ENCODE measurements at regions of chr2 and their contacts with region 1.

Region 1: DNA sequence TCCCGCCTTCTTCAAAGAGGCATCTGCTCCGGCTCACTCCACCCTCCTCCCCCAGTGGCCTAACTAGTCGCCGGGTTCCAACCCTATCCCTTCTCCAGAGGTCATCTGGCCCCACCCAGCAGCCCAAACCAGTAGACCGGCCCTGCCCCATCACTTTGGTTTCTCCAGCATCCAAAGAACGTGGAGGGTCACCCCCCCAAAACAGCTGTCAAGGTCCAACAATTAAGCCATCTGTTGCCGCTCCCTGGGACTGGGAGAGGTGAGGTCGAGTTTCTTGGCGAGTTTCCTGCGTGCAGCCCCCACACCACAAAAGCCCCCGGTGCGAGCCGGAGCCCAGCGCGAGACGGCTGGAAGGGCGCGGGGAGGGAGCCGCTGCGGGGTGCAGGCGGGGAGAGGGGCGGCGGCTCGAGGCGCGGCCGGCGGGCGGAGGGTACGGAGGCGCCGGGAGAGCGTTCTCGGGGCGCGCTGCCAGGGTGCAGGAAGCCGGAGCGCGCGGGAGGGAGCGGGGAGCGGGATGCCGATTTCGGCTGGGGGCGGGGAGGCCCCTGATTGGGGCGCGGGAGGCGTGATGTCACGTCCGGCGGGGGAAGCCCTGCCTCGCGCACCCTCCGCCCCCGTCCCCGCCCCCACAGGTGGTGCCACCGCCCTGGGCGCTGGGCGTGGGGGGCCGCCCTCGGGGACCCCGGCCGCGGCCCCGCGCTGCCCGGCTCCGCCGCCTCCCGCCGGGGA is 571 bp upstream of the GPC1 start:
- DNase-seq: no peak
- ATAC-seq: peak; percentile 78
- H3K4me3 ChIP-seq: peak overlapping the region; percentile 69 to 79
- H3K27ac ChIP-seq: peak overlapping the region; percentile 81
- H3K4me1 ChIP-seq: peaks cover 12% of the 10 kb centered on the region
- H3K27me3 ChIP-seq: no peaks in the 10 kb centered on the region
- CTCF ChIP-seq: no peak

Region 2: GRCh38 chr2:240149943-240150784 is 284.7 kb before region 1 on chr2:
- CTCF ChIA-PET with region 1: no interaction called
- POLR2A ChIA-PET with region 1: no interaction called
- in situ Hi-C with region 1: no loop called
- intact Hi-C with region 1: loop called (anchors 5 kb)
- DNase-seq: no peak
- ATAC-seq: peak; percentile 76
- H3K4me3 ChIP-seq: no peak overlapping the region
- H3K27ac ChIP-seq: no peak overlapping the region
- H3K4me1 ChIP-seq: no peaks in the 10 kb centered on the region; the same call in 1 of the 2 replicates
- H3K27me3 ChIP-seq: peaks cover 8% of the 10 kb centered on the region
- CTCF ChIP-seq: peak; percentile 95

Region 3: GRCh38 chr2:240232961-240233893 is 201.7 kb before region 1 on chr2:
- CTCF ChIA-PET with region 1: interaction called, 6 read pairs
- POLR2A ChIA-PET with region 1: no interaction called
- in situ Hi-C with region 1: no loop called
- intact Hi-C with region 1: loop called (anchors 1 kb)
- DNase-seq: peak; percentile 52
- ATAC-seq: peak; percentile 94
- H3K4me3 ChIP-seq: peak overlapping the region; percentile 37 to 55
- H3K27ac ChIP-seq: no peak overlapping the region
- H3K4me1 ChIP-seq: peaks cover 8% of the 10 kb centered on the region; the same call in 1 of the 2 replicates
- H3K27me3 ChIP-seq: no peaks in the 10 kb centered on the region
- CTCF ChIP-seq: peak; percentile 93

Region 4: GRCh38 chr2:240472078-240472790 is 37.3 kb after region 1 on chr2:
- CTCF ChIA-PET with region 1: no interaction called
- POLR2A ChIA-PET with region 1: no interaction called
- in situ Hi-C with region 1: no loop called
- intact Hi-C with region 1: no loop called
- DNase-seq: no peak
- ATAC-seq: no peak
- H3K4me3 ChIP-seq: no peak overlapping the region
- H3K27ac ChIP-seq: no peak overlapping the region
- H3K4me1 ChIP-seq: no peaks in the 10 kb centered on the region
- H3K27me3 ChIP-seq: no peaks in the 10 kb centered on the region
- CTCF ChIP-seq: no peak

Region 5: DNA sequence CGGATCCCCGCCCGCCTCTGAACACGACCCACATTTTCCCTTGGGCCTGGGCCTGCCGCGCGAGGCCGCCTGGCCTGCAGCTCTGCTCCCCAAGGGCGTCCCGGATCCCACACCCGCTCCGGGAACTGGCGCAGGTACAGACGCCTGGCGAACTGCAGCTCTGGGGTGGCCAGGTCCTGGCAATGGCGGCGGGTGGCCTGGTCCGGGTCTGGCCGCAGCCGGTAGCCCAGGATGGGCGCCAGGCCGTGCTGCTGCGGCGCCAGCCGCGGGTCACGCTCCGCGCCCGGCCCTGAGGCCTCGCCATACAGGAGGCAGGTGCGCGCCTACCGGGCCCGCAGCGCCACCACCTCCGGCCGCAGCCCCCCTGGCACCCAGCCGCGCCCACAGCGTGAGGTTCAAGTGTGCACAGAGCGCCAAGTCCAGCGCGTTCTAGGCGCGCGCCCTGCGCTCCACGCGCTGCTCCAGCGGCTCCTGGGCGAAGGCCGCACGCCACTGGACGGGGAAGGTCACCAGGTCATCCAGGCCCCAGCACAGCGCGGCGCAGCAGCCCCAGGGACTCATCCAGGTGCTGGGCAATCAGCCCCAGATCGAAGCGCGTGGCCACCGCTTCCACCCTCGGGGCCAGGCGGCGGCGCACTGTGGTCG is 266.3 kb after region 1 on chr2:
- CTCF ChIA-PET with region 1: no interaction called
- POLR2A ChIA-PET with region 1: no interaction called
- in situ Hi-C with region 1: no loop called
- intact Hi-C with region 1: no loop called
- DNase-seq: no peak
- ATAC-seq: no peak
- H3K4me3 ChIP-seq: no peak overlapping the region
- H3K27ac ChIP-seq: no peak overlapping the region
- H3K4me1 ChIP-seq: no peaks in the 10 kb centered on the region
- H3K27me3 ChIP-seq: no peaks in the 10 kb centered on the region
- CTCF ChIP-seq: no peak

Measured in Panc1 (cell line).